ENCODE measurements at regions of chr15 and their contacts with region 1.

Region 1: DNA sequence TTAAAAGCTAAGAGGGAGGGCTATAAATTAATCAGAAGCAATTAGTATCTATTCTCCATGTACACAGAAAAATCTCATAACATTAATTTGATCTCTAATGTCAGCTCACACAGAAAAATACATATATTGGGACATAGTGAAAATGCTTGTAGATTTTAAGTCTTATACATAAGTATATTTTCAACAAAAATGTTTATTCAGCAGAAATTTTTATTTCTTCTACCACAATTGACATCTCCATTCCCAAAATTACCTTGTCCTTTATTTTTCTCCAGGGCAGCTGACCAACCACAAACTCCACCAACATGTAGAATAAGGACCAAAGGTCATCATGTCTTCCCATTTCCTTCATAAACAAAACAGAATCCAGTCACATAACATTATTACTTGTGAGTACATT is 74.5 kb upstream of the CDAN1 start:
- DNase-seq: no peak
- H3K4me3 ChIP-seq: no peak overlapping the region
- H3K27ac ChIP-seq: no peak overlapping the region
- H3K4me1 ChIP-seq: no peaks in the 10 kb centered on the region
- H3K27me3 ChIP-seq: no peaks in the 10 kb centered on the region
- CTCF ChIP-seq: no peak
- POLR2A ChIP-seq: no peak

Region 2: DNA sequence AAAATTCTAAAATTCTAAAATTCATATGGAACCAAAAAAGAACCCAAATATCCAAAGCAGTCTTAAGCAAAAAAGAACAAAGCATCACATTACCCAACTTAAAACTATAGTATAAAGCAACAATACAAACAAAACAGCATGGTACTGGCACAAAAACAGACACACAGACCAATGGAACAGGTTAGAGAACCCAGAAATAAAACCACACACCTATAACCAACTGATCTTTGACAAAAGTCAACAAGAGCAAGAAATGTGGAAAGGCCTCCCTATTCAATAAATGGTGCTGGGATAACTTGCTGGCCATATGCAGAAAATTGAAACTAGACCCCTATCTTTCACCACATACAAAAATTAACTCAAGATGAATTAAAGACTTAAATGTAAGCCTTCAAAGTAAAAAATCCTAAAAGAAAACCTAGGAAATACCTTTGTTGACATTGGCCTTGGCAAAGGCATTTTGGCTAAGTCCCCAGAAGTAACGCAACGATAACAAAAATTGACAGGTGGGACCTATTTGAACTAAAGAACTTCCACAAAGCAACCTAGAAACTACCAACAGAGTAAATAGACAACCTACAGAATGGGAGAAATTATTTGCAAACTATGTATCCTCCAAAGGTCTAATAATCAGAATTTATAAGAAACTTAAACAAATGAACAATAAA is 52.3 kb after region 1 on chr15:
- CTCF ChIA-PET with region 1: no interaction called
- POLR2A ChIA-PET with region 1: no interaction called
- dilution Hi-C with region 1: no loop called
- intact Hi-C with region 1: loop called (anchors 5 kb)
- DNase-seq: peak; percentile 43
- H3K4me3 ChIP-seq: no peak overlapping the region
- H3K27ac ChIP-seq: no peak overlapping the region
- H3K4me1 ChIP-seq: no peaks in the 10 kb centered on the region
- H3K27me3 ChIP-seq: no peaks in the 10 kb centered on the region
- CTCF ChIP-seq: no peak
- POLR2A ChIP-seq: no peak

Measured in endothelial cell of umbilical vein (primary cell).